CD8-positive, alpha-beta T cell (primary cell): ENCODE measurements at regions of chr2 and their contacts with region 1.

Region 1: DNA sequence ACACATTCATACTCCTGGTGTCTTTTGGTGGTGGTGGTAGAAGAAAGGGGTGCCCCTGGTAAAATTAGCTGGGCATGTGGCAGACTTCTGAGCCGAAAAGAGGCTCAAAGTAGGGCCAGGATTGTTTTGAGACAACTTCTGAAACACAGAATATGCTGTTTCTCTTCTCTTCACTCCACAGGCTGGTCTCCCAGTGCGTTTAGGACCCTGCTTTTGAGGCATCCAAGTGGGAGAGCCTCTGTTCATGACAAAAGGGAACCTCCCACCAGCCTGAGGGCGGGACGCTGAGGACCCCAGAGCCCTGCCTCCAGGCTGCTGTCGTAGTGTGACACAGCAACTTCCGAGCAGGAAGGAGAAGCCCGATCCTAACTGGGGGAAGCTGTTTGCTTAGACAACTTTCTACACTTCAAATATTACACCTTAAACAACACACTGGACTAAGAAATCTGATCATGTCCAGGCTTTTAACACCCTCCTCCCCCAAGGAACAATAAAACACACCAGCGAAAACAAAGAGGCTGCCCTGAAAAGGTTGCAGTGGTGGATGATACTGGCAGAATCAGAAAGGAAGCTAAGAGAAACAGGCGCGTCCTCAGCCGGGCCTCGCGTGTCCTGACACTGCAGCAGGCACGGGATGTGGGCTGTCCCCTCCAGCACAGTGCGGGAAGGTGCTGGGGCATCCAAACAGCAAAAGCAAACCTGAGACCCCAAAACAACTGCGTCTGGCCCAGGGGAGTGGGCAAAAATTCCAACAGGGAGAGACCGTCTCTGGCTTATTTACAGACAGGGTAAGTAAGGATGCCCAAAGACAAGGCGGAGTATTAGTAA is 9.3 kb downstream of the SERTAD2 start:
- DNase-seq: peak in 7 of 9 experiments; percentile 45 to 80 (median 66)
- ATAC-seq: peak; percentile 74
- H3K4me3 ChIP-seq: peak overlapping the region; percentile 42 to 47
- H3K4me3 Mint-ChIP-seq: peak overlapping the region; percentile 89
- H3K27ac ChIP-seq: peak overlapping the region; percentile 50 to 82
- H3K27ac Mint-ChIP-seq: peak overlapping the region; percentile 93
- H3K4me1 ChIP-seq: peaks cover 71% of the 10 kb centered on the region
- H3K4me1 Mint-ChIP-seq: peaks cover 94% of the 10 kb centered on the region
- H3K27me3 ChIP-seq: no peaks in the 10 kb centered on the region
- H3K27me3 Mint-ChIP-seq: no peaks in the 10 kb centered on the region
- CTCF ChIP-seq: no peak

Region 2: DNA sequence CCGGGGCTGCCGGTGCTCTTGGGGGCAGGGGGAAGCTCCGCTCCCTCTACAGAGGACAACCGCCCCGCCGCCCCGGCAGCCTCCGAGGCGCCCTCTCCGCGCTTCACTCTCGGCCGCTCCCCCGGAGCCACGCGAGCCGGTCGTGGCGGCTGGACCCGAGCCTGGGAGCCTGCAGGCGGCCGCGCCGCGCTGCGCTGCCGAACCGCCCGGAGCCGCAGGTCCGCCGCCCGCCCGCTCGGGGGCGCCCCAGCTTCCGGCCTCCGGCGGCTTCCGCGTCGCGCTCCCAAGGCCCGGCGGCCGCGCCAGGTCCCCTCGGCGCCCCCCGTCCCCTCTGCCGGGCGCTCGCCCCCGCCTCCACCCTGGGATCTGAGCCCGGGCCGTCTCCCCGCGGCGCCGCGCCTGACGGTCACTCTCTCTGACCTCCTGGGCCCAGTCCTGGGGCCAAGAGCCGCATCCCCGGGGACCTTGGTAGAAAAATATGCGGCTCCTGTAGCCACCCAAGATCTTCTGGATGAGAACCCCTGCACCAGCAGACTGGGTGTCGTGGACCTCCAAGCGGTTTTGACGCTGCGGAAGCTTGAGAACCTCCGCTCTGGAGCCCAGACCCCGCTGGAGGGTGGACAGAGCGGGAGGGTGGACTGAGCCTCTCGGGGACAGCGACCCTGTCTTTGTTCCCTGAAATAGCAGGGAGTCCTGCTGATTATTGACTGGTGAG is 35.0 kb before region 1 on chr2:
- CTCF ChIA-PET with region 1: interaction called, 10 read pairs
- POLR2A ChIA-PET with region 1: interaction called, 5 read pairs
- intact Hi-C with region 1: loop called (anchors 1 to 2 kb)
- DNase-seq: peak; percentile 37 to 85 (median 66)
- ATAC-seq: peak; percentile 65
- H3K4me3 ChIP-seq: peak overlapping the region; percentile 56 to 63
- H3K4me3 Mint-ChIP-seq: peak overlapping the region; percentile 79
- H3K27ac ChIP-seq: peak overlapping the region in 1 of 2 experiments; percentile 49
- H3K27ac Mint-ChIP-seq: peak overlapping the region; percentile 66
- H3K4me1 ChIP-seq: peaks cover 26% of the 10 kb centered on the region
- H3K4me1 Mint-ChIP-seq: peaks cover 29% of the 10 kb centered on the region
- H3K27me3 ChIP-seq: no peaks in the 10 kb centered on the region
- H3K27me3 Mint-ChIP-seq: no peaks in the 10 kb centered on the region
- CTCF ChIP-seq: peak; percentile 23

Region 3: DNA sequence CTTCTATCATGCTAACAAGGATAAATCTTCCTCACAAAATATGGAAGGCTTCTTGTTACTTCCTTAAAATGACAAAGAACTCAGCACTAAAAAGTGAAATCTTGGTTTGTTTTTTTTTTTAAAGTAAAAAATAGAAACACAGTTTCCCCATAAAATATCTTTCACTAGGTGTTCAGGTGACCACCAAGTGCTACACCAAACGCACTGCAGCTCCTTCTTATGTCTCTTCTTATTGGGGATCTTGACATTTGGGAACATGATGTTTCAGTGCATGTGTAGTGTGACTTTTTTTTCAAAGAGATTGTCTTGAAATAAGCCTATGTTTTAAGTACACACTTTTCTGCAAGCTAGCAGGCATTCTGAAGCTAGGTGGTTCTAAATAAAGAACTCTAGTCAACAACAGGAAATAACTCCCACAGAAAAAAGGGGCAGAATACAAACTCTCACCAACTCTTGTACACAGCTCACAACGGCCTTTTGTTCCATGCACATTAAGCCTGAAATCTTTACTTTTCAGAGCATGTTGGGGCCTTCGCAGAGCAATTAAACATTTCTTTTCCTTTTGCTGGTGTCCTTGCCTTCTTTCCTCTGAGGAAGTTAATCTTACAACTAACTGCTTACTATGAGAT is 22.5 kb after region 1 on chr2:
- CTCF ChIA-PET with region 1: interaction called, 93 read pairs
- POLR2A ChIA-PET with region 1: interaction called, 3 read pairs
- intact Hi-C with region 1: no loop called
- DNase-seq: peak in 1 of 9 experiments; percentile 38
- ATAC-seq: peak; percentile 70
- H3K4me3 ChIP-seq: no peak overlapping the region
- H3K4me3 Mint-ChIP-seq: peak overlapping the region; percentile 52
- H3K27ac ChIP-seq: peak overlapping the region in 1 of 2 experiments; percentile 73
- H3K27ac Mint-ChIP-seq: peak overlapping the region; percentile 89
- H3K4me1 ChIP-seq: peaks cover 49% of the 10 kb centered on the region
- H3K4me1 Mint-ChIP-seq: peaks cover 33% of the 10 kb centered on the region
- H3K27me3 ChIP-seq: no peaks in the 10 kb centered on the region
- H3K27me3 Mint-ChIP-seq: no peaks in the 10 kb centered on the region
- CTCF ChIP-seq: no peak

Region 4: GRCh38 chr2:64742678-64743077 is 98.3 kb after region 1 on chr2:
- CTCF ChIA-PET with region 1: interaction called, 13 read pairs
- POLR2A ChIA-PET with region 1: interaction called, 5 read pairs
- intact Hi-C with region 1: no loop called
- DNase-seq: no peak
- ATAC-seq: no peak
- H3K4me3 ChIP-seq: no peak overlapping the region
- H3K4me3 Mint-ChIP-seq: no peak overlapping the region
- H3K27ac ChIP-seq: no peak overlapping the region
- H3K27ac Mint-ChIP-seq: no peak overlapping the region
- H3K4me1 ChIP-seq: peaks cover 4% of the 10 kb centered on the region
- H3K4me1 Mint-ChIP-seq: peaks cover 14% of the 10 kb centered on the region
- H3K27me3 ChIP-seq: no peaks in the 10 kb centered on the region
- H3K27me3 Mint-ChIP-seq: no peaks in the 10 kb centered on the region
- CTCF ChIP-seq: no peak

Region 5: DNA sequence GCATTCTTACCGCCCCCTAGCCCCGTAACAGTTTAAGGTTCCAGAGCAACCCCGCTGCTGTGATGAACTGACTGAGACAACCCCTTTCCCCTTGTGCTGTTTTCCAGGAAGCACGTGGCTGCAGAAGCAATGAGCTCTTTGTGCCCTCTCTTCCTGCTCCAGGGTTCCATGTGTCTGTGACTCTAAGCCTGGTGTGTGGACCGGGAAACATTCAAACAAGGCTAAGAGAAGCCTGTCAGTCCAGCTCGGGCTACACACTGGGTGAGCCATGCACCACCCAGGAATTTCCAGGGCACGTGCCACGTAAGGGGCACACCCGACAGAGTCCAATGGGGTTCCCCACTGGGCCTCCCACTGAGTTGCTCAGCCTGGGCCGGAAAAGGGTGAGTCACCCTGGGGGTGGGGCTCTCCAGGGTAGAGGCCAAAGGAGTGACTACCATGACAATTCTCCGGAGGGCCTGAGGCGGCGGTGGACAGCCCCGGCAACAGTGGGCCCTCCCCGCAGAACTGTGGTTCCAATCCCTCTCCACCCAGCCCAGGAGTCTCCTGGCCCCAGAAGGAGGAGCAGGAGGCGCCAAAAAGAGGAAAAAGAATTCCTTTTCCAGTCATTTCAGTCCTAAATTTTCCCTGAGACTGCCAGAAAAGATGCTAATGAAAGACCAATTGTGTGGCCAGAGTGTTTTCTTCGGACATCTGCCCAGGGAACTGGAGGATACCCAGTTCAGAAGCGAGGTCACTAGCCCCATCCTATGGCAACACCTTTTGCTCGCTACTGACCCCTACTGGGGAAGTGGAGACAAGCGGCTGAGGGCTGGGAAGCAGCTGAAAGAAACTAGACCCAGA is 187.0 kb after region 1 on chr2:
- CTCF ChIA-PET with region 1: interaction called, 222 read pairs
- POLR2A ChIA-PET with region 1: interaction called, 3 read pairs
- intact Hi-C with region 1: loop called (anchors 1 kb)
- DNase-seq: peak; percentile 67 to 91 (median 83)
- ATAC-seq: peak; percentile 88
- H3K4me3 ChIP-seq: peak overlapping the region in 1 of 2 experiments; percentile 32
- H3K4me3 Mint-ChIP-seq: peak overlapping the region; percentile 46
- H3K27ac ChIP-seq: peak overlapping the region in 1 of 2 experiments; percentile 4
- H3K27ac Mint-ChIP-seq: no peak overlapping the region
- H3K4me1 ChIP-seq: peaks cover 10% of the 10 kb centered on the region
- H3K4me1 Mint-ChIP-seq: peaks cover 11% of the 10 kb centered on the region
- H3K27me3 ChIP-seq: peaks cover 0 to 5% of the 10 kb centered on the region in 2 experiments
- H3K27me3 Mint-ChIP-seq: peaks cover 3% of the 10 kb centered on the region
- CTCF ChIP-seq: peak; percentile 94

Region 6: DNA sequence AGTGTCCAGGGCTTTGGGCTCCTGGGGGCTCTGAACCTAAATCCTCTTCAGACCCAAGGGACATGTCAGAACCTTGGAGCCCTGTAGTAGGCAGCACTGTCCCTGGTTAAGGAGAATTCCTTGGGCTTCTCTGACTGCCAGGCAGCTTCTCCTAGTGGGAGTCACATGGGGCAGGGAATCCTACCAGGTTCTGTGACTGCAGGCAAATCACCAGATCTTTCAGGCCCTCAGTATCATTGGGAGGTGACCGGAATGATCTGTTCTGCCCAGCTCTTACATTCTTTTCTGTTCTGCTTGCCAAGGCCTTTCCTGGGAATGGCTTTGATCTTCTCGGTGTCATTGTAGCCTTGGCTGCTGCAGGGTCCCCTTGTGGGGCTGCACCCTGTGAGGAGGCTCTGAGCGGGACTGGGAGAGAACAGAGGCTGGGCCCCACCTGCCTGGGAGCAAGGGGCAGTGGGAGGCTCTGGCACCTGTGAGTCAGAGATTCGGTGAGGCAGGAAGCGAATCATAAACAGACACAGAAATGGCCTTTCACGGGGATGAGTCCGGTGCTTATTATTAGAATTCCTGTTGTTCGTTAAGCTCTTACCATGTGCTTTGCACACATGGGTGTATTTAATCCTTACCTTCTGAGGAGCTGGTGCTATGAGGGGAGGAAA is 425.9 kb after region 1 on chr2:
- CTCF ChIA-PET with region 1: no interaction called
- POLR2A ChIA-PET with region 1: no interaction called
- intact Hi-C with region 1: no loop called
- DNase-seq: no peak
- ATAC-seq: no peak
- H3K4me3 ChIP-seq: no peak overlapping the region
- H3K4me3 Mint-ChIP-seq: no peak overlapping the region
- H3K27ac ChIP-seq: no peak overlapping the region
- H3K27ac Mint-ChIP-seq: peak overlapping the region; percentile 78
- H3K4me1 ChIP-seq: peaks cover 20% of the 10 kb centered on the region
- H3K4me1 Mint-ChIP-seq: peaks cover 23% of the 10 kb centered on the region
- H3K27me3 ChIP-seq: no peaks in the 10 kb centered on the region
- H3K27me3 Mint-ChIP-seq: no peaks in the 10 kb centered on the region
- CTCF ChIP-seq: no peak